Breast epithelium (tissue), 4 donors: ENCODE measurements at regions of chr2 and their contacts with region 1.

Region 1: DNA sequence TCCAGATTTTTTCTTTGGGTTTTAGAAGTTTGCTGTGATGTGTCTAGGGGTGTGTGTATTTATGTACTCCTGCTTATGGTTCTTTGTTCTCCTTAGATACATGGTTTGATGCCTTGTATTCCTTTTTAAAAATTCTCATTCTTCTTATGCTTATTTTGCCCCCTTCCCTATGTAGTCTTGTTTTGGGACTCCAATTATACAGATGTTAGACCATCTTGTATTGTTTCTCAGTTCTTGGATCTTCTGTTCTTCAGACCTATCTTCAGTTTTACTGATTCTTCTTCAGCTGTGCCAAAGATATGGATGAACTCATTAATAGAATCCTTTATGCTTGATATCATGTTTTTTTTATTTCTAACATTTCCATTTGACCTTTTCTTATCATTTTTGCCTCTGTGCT is 14.2 kb upstream of the MSL3B start:
- DNase-seq: no peak
- H3K4me3 ChIP-seq: no peak overlapping the region
- H3K27ac ChIP-seq: no peak overlapping the region
- H3K4me1 ChIP-seq: no peaks in the 10 kb centered on the region
- H3K27me3 ChIP-seq: no peaks in the 10 kb centered on the region
- CTCF ChIP-seq: no peak
- POLR2A ChIP-seq: no peak

Region 2: GRCh38 chr2:233817361-233817911 is 64.9 kb before region 1 on chr2:
- intact Hi-C with region 1: loop called (anchors 5 kb)
- DNase-seq: no peak
- H3K4me3 ChIP-seq: no peak overlapping the region
- H3K27ac ChIP-seq: no peak overlapping the region
- H3K4me1 ChIP-seq: no peaks in the 10 kb centered on the region
- H3K27me3 ChIP-seq: no peaks in the 10 kb centered on the region
- CTCF ChIP-seq: no peak
- POLR2A ChIP-seq: no peak